ENCODE measurements at regions of chr10 and their contacts with region 1.

Region 1: DNA sequence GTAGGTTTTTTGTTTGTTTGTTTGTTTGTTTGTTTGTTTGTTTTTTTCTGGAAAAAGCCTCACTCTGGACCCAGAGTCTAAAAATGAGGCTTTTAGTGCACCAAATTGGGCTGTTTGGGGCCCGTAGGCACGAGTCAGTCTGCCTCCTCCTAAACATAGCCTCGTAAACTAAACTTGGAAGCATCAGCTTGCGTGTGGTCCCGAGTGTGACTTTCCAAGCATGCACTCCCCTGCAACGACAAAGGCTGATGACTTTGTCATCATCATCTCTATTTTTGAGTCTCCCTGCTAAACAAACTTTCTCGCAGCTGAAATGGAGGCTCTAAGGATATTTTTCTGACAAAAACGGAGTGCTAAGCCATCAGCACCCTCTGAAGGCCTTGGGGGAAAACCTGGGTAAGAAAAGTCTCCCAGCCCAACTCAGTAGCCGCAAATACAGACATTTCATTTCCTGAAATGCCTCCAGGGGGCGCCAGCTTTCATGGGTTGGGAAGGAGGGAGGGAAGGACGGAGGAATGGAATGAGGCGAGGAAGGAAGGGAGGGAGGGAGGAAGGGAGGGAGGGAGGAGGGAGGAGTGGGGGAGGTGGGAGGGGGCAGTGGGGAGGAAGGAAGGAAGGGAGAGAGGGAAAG is 245.9 kb downstream of the KCNMA1 start:
- DNase-seq: peak; percentile 49
- H3K4me3 ChIP-seq: no peak overlapping the region
- CTCF ChIP-seq: peak; percentile 83

Region 2: DNA sequence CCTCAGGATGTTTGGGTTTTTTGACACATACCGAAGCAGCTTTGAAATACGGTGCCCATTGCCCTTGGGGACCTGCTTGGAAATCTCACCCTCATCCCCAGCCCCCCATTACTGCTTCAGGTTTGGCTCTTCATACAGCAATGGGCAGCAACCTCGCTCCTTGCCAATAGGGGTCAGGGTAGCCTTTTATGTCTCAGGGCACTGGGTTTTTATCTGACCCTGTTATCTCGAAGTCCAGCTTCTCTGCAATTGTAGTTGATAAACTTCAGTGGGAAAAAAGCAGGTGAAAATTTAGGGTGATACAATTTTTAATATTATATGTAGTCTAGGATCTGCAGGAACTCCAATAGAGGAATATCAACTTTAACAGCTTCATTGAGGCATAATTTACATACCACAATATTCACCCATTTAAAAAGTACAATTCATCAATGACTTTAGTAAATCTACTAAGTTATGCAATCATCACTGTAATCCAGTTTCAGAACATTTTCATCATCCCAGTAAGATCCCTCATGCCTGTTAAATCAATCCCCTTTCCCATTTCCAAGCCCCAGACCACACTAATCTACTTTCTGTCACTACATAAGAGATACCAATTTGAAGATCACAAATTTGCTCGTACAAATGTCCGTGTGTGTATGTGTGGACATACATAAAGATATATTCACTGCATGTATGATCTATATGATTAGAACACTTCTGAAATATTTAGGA is 140.3 kb before region 1 on chr10:
- CTCF ChIA-PET with region 1: interaction called, 12 read pairs
- POLR2A ChIA-PET with region 1: no interaction called
- DNase-seq: no peak
- H3K4me3 ChIP-seq: no peak overlapping the region
- CTCF ChIP-seq: peak; percentile 68

Region 3: DNA sequence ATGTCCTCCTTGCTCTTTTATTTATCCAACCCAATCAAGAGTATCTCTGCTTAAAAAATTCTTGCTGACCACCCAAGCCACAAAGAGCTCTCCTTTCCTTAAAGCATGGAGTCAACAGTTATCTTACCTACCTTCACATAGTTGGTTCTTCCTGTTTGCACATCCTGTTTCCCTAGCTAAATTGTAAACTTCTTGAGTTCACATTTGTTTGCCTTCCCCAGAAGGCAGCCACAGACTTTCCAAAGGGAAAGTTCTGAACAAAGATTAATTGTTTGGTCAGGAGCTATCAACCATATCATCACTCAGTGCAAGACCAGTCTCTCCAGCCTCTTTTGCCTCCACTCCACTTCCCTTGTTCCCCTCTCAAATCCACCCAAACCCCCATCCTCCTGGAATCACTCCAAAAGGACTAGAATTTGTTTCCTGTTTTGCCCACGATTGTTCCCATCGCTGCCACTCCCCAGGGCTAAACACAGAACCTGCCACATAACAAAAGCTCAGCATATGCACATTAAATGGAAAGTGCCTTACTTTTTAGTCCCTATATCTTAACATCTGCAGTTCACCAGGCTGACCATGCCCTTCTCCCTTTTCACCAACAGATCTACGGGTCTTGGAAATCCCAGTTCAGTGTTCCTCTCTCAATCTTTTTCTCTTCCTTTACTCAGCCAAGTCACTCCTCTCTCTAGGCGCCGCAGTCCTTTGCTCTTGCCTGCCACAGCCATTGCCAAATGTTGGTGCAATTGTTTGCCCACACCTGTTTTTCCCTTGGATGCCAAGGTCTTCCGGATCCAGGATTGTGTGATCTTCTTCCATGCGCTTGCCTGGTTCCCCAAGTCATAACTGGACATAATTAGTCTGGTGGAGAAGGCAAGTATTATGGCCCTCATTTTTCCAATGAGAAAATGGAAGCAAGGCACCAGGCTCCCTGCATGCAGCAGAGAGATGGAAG is 19.6 kb before region 1 on chr10:
- CTCF ChIA-PET with region 1: interaction called, 10 read pairs
- POLR2A ChIA-PET with region 1: no interaction called
- DNase-seq: no peak
- H3K4me3 ChIP-seq: no peak overlapping the region
- CTCF ChIP-seq: no peak

Region 4: GRCh38 chr10:77380191-77380590 is 11.5 kb before region 1 on chr10:
- CTCF ChIA-PET with region 1: interaction called, 25 read pairs
- POLR2A ChIA-PET with region 1: no interaction called
- DNase-seq: no peak
- H3K4me3 ChIP-seq: no peak overlapping the region
- CTCF ChIP-seq: no peak

Region 5: GRCh38 chr10:77416311-77417135 is 24.8 kb after region 1 on chr10:
- CTCF ChIA-PET with region 1: interaction called, 63 read pairs
- POLR2A ChIA-PET with region 1: interaction called, 13 read pairs
- DNase-seq: peak; percentile 86
- H3K4me3 ChIP-seq: peak overlapping the region; percentile 3; the same call in 1 of the 2 replicates
- CTCF ChIP-seq: no peak

Measured in AG04449 (cell line).